Mammary epithelial cell (primary cell): ENCODE measurements at regions of chr17 and their contacts with region 1.

Region 1: DNA sequence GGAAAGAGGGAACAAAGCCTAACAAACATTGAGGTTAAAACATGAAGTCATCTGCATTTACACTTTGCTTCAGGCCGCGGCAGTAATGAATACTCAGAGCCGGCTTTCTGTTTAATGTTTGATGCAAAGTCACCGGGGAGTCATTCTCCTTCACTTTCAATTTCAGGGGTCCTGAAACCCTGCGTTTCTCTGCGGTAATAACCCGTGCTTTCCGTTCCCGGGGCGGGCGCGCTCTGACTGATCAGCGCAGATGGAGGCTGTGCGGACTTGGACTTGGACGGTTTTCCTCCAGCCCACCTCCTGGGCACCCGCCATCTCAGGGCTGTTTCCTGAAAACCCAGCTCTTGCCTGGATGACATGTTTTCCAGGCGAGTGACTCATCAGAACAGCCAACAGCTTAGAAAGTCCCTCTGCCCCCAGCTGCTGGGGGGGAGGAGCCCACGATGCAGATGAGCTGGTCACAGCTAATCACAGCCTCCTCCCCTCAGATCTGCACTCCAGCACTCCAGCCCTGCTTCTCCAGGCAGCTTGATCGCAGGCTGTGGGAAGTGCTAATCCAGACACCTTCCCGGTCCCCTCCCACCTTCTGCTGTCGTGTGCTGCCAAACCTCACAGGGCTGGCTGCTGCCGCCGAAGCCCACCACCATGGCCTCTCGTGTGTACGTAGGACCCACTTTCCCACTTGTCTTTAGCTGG is 158.6 kb upstream of the CHMP6 start:
- DNase-seq: peak; percentile 97
- H3K4me3 ChIP-seq: peak overlapping the region; percentile 31 to 51 (median 48)
- H3K27ac ChIP-seq: peak overlapping the region; percentile 85
- H3K4me1 ChIP-seq: peaks cover 16% of the 10 kb centered on the region
- H3K27me3 ChIP-seq: no peaks in the 10 kb centered on the region
- CTCF ChIP-seq: no peak

Region 2: DNA sequence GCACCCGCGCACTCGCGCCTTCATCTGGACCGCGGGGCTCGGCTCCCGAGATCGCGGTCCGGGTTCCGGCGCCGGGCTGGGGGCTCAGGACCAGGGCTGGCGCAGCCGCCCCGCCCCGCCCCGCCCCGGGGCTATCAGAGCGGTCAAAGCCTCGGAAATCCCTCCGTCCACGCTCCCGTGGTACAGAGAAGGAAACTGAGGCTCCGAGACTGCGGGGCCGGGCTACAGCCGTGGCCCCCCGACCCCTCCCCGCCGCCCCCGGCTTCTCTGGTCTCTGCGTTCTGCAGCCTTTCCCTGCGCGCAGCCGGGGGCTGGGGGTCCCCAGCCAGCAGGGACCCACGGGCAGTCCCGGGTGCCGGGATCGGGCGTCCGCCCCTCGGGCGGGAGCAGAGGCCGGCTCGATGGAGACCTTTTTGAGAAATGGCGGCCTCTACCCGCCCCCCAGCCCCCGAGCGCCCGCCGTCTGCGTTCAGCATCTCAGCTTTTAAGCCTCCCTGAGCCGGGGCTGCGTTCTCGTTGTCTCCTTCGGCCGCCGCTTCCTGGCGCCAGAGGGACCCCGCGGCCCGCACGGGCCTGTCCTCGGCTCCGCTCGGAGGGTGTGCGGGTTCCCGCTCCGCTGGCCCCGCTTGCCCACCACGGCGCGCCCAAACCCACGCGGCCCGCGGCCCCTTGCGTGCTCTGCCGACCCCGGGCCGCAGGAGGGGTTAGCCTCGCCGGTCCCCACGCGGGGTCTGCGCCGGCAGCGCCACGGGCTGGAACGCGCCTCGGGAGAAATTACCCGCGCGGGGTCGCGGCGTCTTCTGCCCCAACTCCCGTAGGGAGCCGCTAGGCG is 355.2 kb before region 1 on chr17:
- CTCF ChIA-PET with region 1: no interaction called
- dilution Hi-C with region 1: no loop called
- in situ Hi-C with region 1: no loop called
- intact Hi-C with region 1: loop called (anchors 10 kb)
- DNase-seq: peak; percentile 35
- H3K4me3 ChIP-seq: peak overlapping the region in 2 of 3 experiments; percentile 30
- H3K27ac ChIP-seq: no peak overlapping the region
- H3K4me1 ChIP-seq: peaks cover 33% of the 10 kb centered on the region
- H3K27me3 ChIP-seq: peaks cover 57% of the 10 kb centered on the region
- CTCF ChIP-seq: peak; percentile 18 to 61

Region 3: GRCh38 chr17:80761110-80761871 is 71.7 kb before region 1 on chr17:
- CTCF ChIA-PET with region 1: no interaction called
- dilution Hi-C with region 1: no loop called
- in situ Hi-C with region 1: no loop called
- intact Hi-C with region 1: loop called (anchors 1 kb)
- DNase-seq: peak; percentile 75
- H3K4me3 ChIP-seq: no peak overlapping the region
- H3K27ac ChIP-seq: peak overlapping the region; percentile 2
- H3K4me1 ChIP-seq: peaks cover 17% of the 10 kb centered on the region
- H3K27me3 ChIP-seq: no peaks in the 10 kb centered on the region
- CTCF ChIP-seq: no peak

Region 4: DNA sequence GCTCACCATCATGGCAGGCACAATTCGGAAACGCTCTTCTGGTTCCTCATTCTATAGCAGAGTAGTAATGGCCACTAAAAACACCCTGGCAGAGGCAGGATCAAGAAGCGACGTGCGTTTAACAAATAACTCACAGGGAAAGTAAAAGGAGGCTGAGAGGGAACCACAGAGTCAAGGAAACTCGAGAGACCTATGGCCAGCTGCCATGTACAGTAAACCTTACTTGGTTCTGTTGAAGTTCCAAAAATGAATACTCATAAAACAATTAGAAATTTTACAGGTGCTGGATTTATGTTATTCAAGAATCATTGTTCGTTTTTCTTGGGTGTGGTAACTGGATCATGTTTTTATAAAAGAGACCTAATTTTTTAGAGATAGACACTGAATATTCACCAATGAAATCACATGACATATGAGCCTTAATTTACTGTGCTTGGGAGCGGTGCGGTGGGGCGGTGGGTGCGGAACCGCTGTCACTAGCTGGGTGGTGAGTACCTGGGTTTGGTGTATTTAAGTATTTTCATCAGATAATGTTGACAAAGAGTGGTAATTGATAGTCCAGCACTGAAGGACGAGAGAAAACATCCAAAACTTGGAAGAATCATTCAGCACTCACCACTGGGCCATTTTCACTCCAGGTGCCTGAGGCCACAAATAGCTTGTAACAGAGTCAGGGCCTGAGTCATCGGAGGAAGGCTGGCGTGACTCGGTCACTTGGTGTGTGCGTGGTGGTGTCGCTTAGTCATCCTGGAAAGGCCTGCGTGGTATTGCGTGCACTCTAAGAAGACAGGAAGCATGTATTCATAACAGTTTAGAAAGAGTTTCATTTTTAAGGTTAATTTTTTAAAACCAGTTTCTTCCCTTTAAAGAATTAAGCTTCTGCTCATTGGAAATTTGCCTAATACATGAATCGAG is 23.2 kb after region 1 on chr17:
- CTCF ChIA-PET with region 1: no interaction called
- dilution Hi-C with region 1: loop called (anchors 5 kb)
- in situ Hi-C with region 1: no loop called
- intact Hi-C with region 1: loop called (anchors 1 kb)
- DNase-seq: peak; percentile 98
- H3K4me3 ChIP-seq: no peak overlapping the region
- H3K27ac ChIP-seq: peak overlapping the region; percentile 99
- H3K4me1 ChIP-seq: peaks cover 61% of the 10 kb centered on the region
- H3K27me3 ChIP-seq: no peaks in the 10 kb centered on the region
- CTCF ChIP-seq: no peak

Region 5: DNA sequence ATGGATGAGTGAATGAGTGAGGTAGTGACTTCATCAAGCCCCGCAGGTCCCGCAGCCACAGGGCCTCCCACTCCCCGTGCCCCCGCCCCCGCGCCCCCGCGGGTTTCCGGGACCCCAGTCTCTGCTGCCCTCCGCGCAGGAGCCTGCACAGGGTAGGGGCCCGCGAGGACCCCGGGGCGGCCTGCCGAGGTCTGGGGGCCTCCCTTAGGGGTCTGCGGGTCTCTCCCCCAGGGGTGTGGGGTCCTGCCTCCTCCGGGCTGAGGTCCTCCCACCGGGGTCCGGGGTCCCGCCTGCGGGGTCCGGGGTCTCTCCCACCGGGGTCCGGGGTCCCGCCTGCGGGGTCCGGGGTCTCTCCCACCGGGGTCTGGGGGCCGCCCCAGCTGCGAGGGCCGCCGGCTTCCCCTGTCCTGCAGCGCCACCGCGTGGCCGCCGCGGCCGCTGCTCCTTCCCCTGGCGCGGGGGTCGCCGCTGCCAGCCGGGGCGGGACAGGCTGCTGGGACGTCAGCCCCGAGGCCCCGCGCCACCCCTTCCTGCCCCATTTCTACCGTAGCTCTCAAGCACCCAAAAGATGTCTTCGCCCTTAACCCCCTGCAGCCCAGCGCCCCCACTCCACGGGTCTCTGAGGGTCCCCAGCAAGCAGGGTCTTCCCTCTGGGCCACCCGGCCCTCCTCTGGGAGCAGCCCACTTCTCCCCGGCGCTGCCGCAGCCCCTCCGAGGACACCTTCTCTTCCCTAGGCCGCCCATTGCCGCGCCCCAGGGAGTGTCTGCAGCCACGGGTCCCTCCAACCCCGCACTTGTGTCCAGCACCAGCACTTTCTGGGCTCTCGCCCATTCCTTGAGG is 148.2 kb after region 1 on chr17:
- CTCF ChIA-PET with region 1: no interaction called
- dilution Hi-C with region 1: no loop called
- in situ Hi-C with region 1: no loop called
- intact Hi-C with region 1: no loop called
- DNase-seq: no peak
- H3K4me3 ChIP-seq: no peak overlapping the region
- H3K27ac ChIP-seq: no peak overlapping the region
- H3K4me1 ChIP-seq: no peaks in the 10 kb centered on the region
- H3K27me3 ChIP-seq: no peaks in the 10 kb centered on the region
- CTCF ChIP-seq: peak; percentile 35 to 47